ENCODE measurements at regions of chr1 and their contacts with region 1.

Region 1: GRCh38 chr1:109186733-109187086 is 27.0 kb upstream of the SARS1 start:
- DNase-seq: peak; percentile 79
- H3K4me3 ChIP-seq: no peak overlapping the region
- H3K27ac ChIP-seq: peak overlapping the region; percentile 62 to 79 (median 78)
- H3K4me1 ChIP-seq: peaks cover 0 to 18% (median 18%) of the 10 kb centered on the region in 4 donors
- H3K27me3 ChIP-seq: no peaks in the 10 kb centered on the region
- CTCF ChIP-seq: no peak
- EP300 ChIP-seq: no peak
- POLR2A ChIP-seq: no peak

Region 2: DNA sequence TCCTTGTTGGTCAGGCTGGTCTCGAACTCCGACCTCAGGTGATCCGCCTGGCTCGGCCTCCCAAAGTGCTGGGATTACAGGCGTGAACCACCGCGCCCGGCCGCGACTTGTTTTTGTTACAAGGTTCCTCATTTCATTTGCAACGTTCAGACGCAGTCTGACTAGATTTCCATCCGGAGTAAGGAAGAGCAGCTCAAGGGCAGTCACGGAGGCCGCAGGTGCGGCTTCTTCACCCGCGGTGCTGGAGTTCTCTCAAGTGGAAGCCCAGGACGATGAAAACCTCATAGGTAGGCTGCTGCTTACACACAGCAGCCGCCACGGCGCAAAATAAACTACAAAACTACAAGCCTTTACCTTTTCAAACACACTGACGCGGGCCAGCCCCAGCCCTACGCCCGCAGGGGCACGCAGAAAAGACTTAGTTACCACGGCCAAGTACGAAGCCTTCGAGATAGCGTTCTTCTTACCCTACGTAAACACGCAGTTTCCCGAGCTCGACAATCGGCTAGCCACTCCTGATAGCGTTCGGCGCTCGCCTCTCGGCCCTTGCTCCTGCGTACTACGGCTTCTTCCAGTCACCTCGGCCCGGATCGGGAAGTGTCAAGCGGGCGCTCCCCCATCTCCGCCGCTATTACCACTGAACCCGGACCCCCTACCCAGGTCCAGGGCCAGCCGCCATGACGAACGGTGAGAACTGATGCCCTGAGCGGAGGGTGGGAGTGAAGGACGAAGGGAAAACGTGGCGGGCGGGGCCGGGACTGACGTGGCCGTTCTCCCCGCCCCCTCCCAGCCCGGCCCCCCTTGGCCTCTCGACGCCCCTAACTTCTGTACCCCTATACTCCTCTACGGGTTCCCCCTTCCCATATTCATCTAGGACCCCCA is 96.3 kb before region 1 on chr1 and contains the start of gene TMEM167B:
- intact Hi-C with region 1: no loop called
- DNase-seq: peak; percentile 96
- H3K4me3 ChIP-seq: peak within 1 kb of the TSS; percentile 70 to 88 (median 78)
- H3K27ac ChIP-seq: peak within 1 kb of the TSS; percentile 93 to 97 (median 96)
- H3K4me1 ChIP-seq: peaks cover 0 to 55% (median 42%) of the 10 kb centered on the region in 4 donors
- H3K27me3 ChIP-seq: no peaks in the 10 kb centered on the region
- CTCF ChIP-seq: no peak
- EP300 ChIP-seq: peak in 2 of 4 donors; percentile 3 to 24
- POLR2A ChIP-seq: peak; percentile 56 to 82
- total RNA-seq, gene TMEM167B: 21.9 to 33.2 (median 26.8) TPM

Region 3: DNA sequence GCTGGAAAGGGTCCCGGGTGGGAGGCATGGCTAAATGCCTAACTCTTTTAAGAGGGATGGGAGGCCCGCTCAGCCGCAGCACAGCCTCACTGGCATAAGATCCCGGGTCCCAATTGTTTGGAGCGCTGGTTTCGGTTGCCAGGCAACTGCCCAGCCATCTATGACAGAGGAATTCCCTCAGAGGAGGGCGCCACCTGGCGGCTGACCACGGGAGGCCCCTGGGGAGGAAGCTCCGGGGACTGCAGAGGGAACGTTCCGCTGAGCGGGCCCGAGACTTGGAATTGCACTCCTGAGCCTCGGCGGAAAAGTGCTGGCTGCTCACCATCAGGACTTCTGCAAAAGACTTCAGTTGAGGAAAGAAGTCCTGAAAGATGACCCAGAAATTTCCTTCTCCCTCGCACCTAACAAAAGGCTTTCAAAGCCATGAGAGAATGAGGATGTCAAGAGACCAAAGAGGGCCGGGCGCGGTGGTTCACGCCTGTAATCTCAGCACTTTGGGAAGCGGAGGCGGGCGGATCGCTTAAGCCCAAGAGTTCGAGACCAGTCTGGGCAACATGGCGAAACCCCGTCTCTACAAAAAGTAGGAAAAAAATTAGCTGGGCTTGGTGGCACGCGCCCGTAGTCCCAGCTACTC is 73.9 kb before region 1 on chr1:
- intact Hi-C with region 1: loop called (anchors 5 kb)
- DNase-seq: peak; percentile 96
- H3K4me3 ChIP-seq: peak overlapping the region; percentile 7 to 45 (median 36)
- H3K27ac ChIP-seq: peak overlapping the region in 3 of 4 donors; percentile 46 to 68 (median 50)
- H3K4me1 ChIP-seq: peaks cover 0 to 24% (median 24%) of the 10 kb centered on the region in 4 donors
- H3K27me3 ChIP-seq: peaks cover 0 to 42% (median 34%) of the 10 kb centered on the region in 3 donors
- CTCF ChIP-seq: peak; percentile 86 to 95 (median 90)
- EP300 ChIP-seq: no peak
- POLR2A ChIP-seq: no peak

Measured in sigmoid colon (tissue), 7 donors.